ENCODE measurements at regions of chr12 and their contacts with region 1.

Region 1: DNA sequence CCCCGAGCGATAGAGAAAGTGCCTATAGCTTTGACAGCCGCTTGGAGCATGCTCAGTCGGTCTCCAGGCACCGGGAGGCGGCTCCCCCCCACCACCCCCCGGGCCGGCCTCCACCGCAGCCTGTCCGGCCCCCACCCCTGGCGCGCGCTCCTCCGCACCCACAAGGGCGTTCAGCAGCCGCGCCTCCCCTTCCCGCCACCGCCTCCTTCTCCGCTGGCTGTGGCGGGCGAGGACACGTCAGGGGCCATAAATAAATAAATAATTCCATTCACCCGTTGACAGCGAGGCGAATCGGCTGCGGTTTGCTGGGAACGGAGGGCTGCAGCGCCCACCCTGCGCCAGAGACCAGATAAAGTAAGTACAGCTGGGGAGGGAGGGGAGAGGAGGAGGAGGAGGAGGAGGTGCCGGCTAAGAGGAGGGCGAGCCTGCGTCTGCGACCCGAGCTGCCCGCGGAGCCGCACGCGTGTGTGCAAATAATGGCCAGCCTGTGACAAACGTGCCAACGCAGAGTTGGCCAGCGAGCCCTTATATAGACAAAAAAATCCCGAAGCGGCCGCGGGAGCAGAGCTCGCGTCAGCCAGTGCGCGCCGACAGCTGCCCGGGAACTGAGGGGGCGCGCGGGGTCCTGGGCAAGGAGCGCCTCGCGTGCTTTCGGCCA is at the start of gene SLC16A7:
- DNase-seq: peak; percentile 89 to 91
- ATAC-seq: peak; percentile 87 to 95 (median 90)
- H3K4me3 ChIP-seq: peak within 1 kb of the TSS; percentile 62 to 86 (median 69)
- H3K27ac ChIP-seq: peak within 1 kb of the TSS; percentile 94 to 99 (median 96)
- H3K4me1 ChIP-seq: peaks cover 0 to 48% (median 30%) of the 10 kb centered on the region in 9 donors
- H3K27me3 ChIP-seq: no peaks in the 10 kb centered on the region
- CTCF ChIP-seq: no peak
- total RNA-seq, gene SLC16A7: 96.3 to 246 (median 184) TPM

Region 2: DNA sequence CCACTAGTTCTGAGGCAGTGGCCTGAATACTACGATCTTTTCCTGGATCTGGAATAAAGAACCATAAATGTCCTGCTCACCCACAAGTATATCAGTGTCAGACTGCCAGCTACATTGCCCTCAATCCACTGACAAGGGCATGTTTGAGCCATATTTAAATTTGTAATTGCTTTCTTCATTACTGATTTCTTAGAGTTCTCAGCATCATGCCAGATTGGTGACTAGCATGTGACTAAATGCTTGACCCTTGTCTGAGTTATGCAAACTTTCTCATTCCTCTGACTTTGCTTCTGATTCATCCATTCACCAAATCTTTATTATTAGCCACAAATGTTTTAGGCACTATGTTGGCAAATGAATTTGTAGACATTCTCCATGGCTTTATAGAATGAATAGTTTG is 143.8 kb before region 1 on chr12:
- intact Hi-C with region 1: loop called in 1 of 10 experiments (anchors 10 kb)
- DNase-seq: no peak
- ATAC-seq: peak in 2 of 8 donors; percentile 27 to 44
- H3K4me3 ChIP-seq: no peak overlapping the region
- H3K27ac ChIP-seq: no peak overlapping the region
- H3K4me1 ChIP-seq: peaks cover 0 to 12% (median 5%) of the 10 kb centered on the region in 9 donors
- H3K27me3 ChIP-seq: no peaks in the 10 kb centered on the region
- CTCF ChIP-seq: no peak

Region 3: GRCh38 chr12:59657266-59657665 is 61.3 kb after region 1 on chr12:
- intact Hi-C with region 1: loop called in 1 of 10 experiments (anchors 5 kb)
- DNase-seq: no peak
- ATAC-seq: no peak
- H3K4me3 ChIP-seq: no peak overlapping the region
- H3K27ac ChIP-seq: peak overlapping the region in 1 of 10 donors; percentile 22
- H3K4me1 ChIP-seq: peaks cover 0 to 14% (median 3%) of the 10 kb centered on the region in 9 donors
- H3K27me3 ChIP-seq: no peaks in the 10 kb centered on the region
- CTCF ChIP-seq: no peak

Region 4: GRCh38 chr12:59708064-59708463 is 112.1 kb after region 1 on chr12:
- intact Hi-C with region 1: no loop called
- DNase-seq: no peak
- ATAC-seq: no peak
- H3K4me3 ChIP-seq: no peak overlapping the region
- H3K27ac ChIP-seq: no peak overlapping the region
- H3K4me1 ChIP-seq: peaks cover 0 to 25% (median 0%) of the 10 kb centered on the region in 9 donors
- H3K27me3 ChIP-seq: no peaks in the 10 kb centered on the region
- CTCF ChIP-seq: no peak

Region 5: DNA sequence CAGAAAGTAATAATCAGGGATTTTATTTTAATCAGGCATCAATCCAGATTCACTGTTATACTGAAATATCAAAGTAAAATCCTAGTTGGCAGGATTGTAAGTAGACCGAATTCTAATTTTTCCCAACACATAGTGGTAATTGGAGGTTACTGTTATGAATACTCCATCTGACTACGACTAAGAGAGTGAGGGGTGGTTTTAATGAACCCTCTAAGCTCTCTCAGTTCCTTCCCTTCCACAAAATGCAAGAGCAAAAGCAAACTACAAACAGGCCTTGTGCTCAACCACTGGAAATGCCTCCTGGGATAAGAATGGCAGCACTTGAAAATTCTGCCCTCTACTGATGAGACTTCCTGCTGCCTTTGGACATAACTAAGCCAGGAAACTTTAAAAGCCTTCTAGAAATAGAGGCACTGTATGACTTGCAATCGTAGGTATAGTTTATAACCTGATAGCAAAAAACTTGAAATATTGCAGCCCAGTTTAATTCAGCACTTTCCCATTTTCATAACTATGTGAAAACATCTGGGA is 184.7 kb after region 1 on chr12:
- intact Hi-C with region 1: loop called in 4 of 10 experiments (anchors 5 to 10 kb)
- DNase-seq: no peak
- ATAC-seq: peak in 6 of 8 donors; percentile 34 to 69 (median 55)
- H3K4me3 ChIP-seq: no peak overlapping the region
- H3K27ac ChIP-seq: peak overlapping the region in 1 of 10 donors; percentile 14
- H3K4me1 ChIP-seq: no peaks in the 10 kb centered on the region
- H3K27me3 ChIP-seq: no peaks in the 10 kb centered on the region
- CTCF ChIP-seq: peak in 8 of 9 donors; percentile 6 to 58 (median 40)